Right cardiac atrium (tissue), 5 donors: ENCODE measurements at regions of chr9 and their contacts with region 1.

Region 1: GRCh38 chr9:75866273-75866871 is 24.1 kb upstream of the PCSK5 start:
- DNase-seq: no peak
- ATAC-seq: no peak
- H3K4me3 ChIP-seq: no peak overlapping the region
- H3K27ac ChIP-seq: no peak overlapping the region
- H3K4me1 ChIP-seq: no peaks in the 10 kb centered on the region
- H3K27me3 ChIP-seq: no peaks in the 10 kb centered on the region

Region 2: DNA sequence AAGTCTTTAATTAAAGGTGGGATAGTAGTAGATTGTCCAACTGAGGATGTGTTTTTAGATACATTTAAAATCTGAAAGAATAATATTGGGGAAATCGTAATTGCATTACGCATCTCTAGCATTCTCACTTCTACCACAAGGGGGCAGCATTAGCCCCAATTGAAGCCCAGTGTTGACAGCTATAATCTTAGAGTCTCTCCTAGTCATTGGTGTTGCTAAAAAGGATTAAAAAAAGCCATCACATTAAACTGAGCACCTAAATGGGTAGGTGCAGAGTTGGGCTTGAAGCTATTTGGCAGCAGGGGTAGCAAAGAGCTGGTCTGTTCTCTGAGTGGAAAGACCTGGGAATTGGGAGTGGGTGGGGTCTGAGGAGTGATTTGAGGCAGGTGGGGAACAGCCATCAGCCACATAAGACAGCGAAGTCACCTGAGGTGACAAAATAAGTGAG is 600.8 kb before region 1 on chr9:
- intact Hi-C with region 1: loop called in 3 of 4 experiments (anchors 5 kb)
- DNase-seq: peak in 1 of 3 donors; percentile 17
- ATAC-seq: peak; percentile 64 to 74
- H3K4me3 ChIP-seq: no peak overlapping the region
- H3K27ac ChIP-seq: no peak overlapping the region
- H3K4me1 ChIP-seq: no peaks in the 10 kb centered on the region
- H3K27me3 ChIP-seq: no peaks in the 10 kb centered on the region

Region 3: GRCh38 chr9:75333624-75334023 is 532.7 kb before region 1 on chr9:
- intact Hi-C with region 1: loop called in 2 of 4 experiments (anchors 5 to 10 kb)
- DNase-seq: no peak
- ATAC-seq: no peak
- H3K4me3 ChIP-seq: no peak overlapping the region
- H3K27ac ChIP-seq: no peak overlapping the region
- H3K4me1 ChIP-seq: no peaks in the 10 kb centered on the region
- H3K27me3 ChIP-seq: no peaks in the 10 kb centered on the region

Region 4: DNA sequence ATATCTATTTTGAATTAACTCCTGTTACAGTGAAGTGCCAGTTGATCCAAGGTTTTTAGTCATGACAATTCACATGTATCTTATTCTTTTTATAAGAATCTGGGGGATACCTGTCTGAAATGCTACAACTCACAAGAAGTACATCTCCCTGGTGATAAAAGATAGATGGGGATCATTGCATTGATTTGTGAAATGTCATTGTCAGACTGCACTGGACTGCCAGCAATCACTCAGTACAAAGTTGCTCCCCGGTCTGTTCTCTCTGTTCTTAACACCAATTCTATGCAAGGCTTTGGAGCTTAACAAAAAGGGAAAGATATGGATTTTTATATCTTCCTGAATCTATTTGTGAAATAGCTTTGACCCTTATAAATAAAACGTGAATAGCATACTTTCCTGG is 147.7 kb before region 1 on chr9:
- intact Hi-C with region 1: no loop called
- DNase-seq: no peak
- ATAC-seq: no peak
- H3K4me3 ChIP-seq: no peak overlapping the region
- H3K27ac ChIP-seq: no peak overlapping the region
- H3K4me1 ChIP-seq: no peaks in the 10 kb centered on the region
- H3K27me3 ChIP-seq: no peaks in the 10 kb centered on the region